Activated CD8-positive, alpha-beta memory T cell treated with anti-CD3 and anti-CD28 coated beads, Interleukin-2, amount 10 ng/mL, durations not matched to agents 7 days and 5 days (primary cell): ENCODE measurements at regions of chr3 and their contacts with region 1.

Region 1: GRCh38 chr3:45884368-45885201 is 1.8 kb upstream of the CCR9 start:
- DNase-seq: no peak
- ATAC-seq: peak; percentile 25
- H3K4me3 Mint-ChIP-seq: peak overlapping the region; percentile 55
- H3K27ac Mint-ChIP-seq: peak overlapping the region; percentile 37
- H3K4me1 Mint-ChIP-seq: peaks cover 77% of the 10 kb centered on the region
- H3K27me3 Mint-ChIP-seq: peaks cover 41% of the 10 kb centered on the region

Region 2: GRCh38 chr3:45895686-45896468 is 11.3 kb after region 1 on chr3:
- CTCF ChIA-PET with region 1: interaction called, 10 read pairs
- DNase-seq: no peak
- ATAC-seq: no peak
- H3K4me3 Mint-ChIP-seq: no peak overlapping the region
- H3K27ac Mint-ChIP-seq: no peak overlapping the region
- H3K4me1 Mint-ChIP-seq: peaks cover 33% of the 10 kb centered on the region
- H3K27me3 Mint-ChIP-seq: peaks cover 39% of the 10 kb centered on the region

Region 3: GRCh38 chr3:45944830-45945620 is 60.4 kb after region 1 on chr3:
- CTCF ChIA-PET with region 1: no interaction called
- DNase-seq: no peak
- ATAC-seq: peak; percentile 28
- H3K4me3 Mint-ChIP-seq: peak overlapping the region; percentile 73
- H3K27ac Mint-ChIP-seq: peak overlapping the region; percentile 84
- H3K4me1 Mint-ChIP-seq: peaks cover 93% of the 10 kb centered on the region
- H3K27me3 Mint-ChIP-seq: no peaks in the 10 kb centered on the region